KBM-7 (cell line): ENCODE measurements at regions of chr16 and their contacts with region 1.

Region 1: DNA sequence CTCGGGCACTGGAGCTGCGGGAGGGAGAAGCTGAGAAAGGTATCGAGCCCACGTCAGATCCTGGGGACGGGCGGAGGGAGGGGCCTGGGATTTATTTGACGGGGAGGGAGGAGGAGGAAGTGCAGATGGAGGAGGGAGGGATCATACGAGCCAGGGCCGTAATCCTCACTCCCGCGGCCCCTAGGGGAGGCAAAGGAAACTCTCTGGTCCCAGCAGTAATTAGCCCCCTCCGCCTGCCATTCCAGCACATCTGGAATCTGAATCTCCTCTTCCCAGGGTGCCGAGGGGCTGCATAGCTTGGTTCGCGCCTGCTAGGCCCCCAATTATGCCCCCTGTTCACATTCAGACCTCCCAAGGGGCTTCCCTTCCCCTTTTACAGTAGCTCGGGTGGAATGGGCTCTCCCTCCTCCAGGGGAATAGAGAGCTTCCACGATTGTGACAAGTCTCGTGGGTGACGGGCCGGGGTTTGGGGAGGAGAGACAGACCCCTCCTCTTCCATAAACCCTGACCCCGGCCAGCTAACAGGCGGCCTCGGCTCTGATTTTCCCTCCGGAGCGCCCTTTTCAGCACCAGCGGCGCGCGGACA is at the start of gene SEZ6L2:
- DNase-seq: peak; percentile 96

Region 2: GRCh38 chr16:29831490-29831889 is 68.1 kb before region 1 on chr16:
- in situ Hi-C with region 1: loop called (anchors 10 kb)
- DNase-seq: no peak